Activated T-helper 2 cell treated with anti-CD3 and anti-CD28 coated beads, Interferon-gamma antibody, Interleukin-2, Interleukin-4, amounts not matched to agents 10 μg/mL and 5 μg/mL and 100 μg/mL, durations not matched to agents 14 hours and 24 hours and 36 hours (primary cell): ENCODE measurements at regions of chr7 and their contacts with region 1.

Region 1: DNA sequence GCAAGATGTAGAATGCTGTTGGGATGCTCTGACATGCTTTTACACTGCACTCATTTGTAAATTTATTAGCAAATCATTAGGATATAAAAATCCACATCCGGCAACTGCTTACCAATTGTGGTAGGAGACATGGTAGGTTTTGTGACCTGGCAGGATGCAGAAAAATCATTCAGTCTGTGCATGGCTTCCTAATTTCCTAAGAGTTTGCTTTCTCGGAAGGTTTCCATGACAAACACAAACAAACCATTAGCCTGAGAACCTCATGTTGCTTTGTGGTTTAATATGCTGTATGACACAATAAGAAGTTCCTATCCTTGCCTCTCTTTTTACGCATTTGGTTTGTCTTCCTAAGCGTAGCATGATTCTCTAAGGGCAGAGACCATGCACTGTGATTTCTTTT is 14.7 kb upstream of the LMBR1 start:
- DNase-seq: no peak
- H3K4me3 Mint-ChIP-seq: no peak overlapping the region
- H3K27ac Mint-ChIP-seq: no peak overlapping the region
- H3K4me1 Mint-ChIP-seq: peaks cover 9% of the 10 kb centered on the region
- H3K27me3 Mint-ChIP-seq: peaks cover 7% of the 10 kb centered on the region

Region 2: DNA sequence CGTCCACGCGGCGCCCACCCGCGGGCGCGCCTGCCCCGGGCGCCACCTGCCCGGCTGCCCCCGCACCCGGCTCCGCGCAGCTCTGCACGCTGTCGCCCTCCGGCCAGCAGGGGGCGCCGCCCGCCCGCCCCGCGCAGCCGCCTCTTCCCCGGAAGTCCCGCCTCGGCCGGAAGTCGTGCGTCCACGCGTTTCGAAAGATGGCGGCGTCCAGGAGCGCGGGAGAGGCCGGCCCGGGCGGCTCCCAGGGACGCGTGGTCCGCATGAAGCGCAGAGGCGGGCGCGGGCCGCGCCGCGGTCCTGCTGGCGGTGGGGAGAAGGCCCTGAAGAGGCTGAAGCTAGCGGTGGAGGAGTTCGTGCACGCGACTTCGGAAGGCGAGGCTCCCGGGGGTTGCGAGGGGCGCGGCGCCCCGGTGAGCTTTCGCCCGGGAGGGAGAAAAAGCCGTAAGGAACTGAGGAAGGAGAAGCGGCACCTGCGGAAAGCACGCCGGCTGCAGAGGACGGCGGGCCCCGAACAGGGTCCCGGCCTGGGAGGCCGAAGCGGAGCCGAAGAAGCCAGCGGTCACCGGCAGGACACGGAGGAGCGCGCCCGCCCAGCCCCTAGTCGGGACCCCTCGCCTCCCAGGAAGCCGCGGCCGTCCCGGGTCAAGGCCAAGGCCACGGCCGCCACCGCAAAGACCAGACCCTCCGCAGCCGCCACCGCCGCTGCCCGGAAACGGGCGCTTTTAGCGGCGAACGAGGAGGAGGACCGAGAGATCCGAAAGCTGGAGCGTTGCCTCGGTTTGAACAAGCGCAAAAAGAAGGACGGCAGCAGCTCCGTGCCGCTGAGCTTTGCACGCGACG is 42.1 kb after region 1 on chr7 and contains the start of gene NOM1:
- intact Hi-C with region 1: loop called (anchors 5 kb)
- DNase-seq: peak; percentile 84
- H3K4me3 Mint-ChIP-seq: peak within 1 kb of the TSS; percentile 92
- H3K27ac Mint-ChIP-seq: peak within 1 kb of the TSS; percentile 89
- H3K4me1 Mint-ChIP-seq: peaks cover 24% of the 10 kb centered on the region
- H3K27me3 Mint-ChIP-seq: peaks cover 20% of the 10 kb centered on the region
- total RNA-seq, gene NOM1: 46.7 and 47.2 TPM in 2 replicates